Dendritic cell treated with granulocyte-macrophage colony-stimulating factor and Interleukin-4, amounts not matched to agents 40 ng/mL and 50 ng/mL, for 4 days (primary cell): ENCODE measurements at regions of chr14 and their contacts with region 1.

Region 1: GRCh38 chr14:69852531-69853321 is 26.5 kb upstream of the SMOC1 start:
- H3K4me3 Mint-ChIP-seq: no peak overlapping the region
- H3K27ac Mint-ChIP-seq: no peak overlapping the region
- H3K4me1 Mint-ChIP-seq: no peaks in the 10 kb centered on the region
- H3K27me3 Mint-ChIP-seq: peaks cover 12% of the 10 kb centered on the region

Region 2: GRCh38 chr14:69827560-69827959 is 25.2 kb before region 1 on chr14:
- intact Hi-C with region 1: loop called (anchors 1 kb)
- H3K4me3 Mint-ChIP-seq: no peak overlapping the region
- H3K27ac Mint-ChIP-seq: no peak overlapping the region
- H3K4me1 Mint-ChIP-seq: no peaks in the 10 kb centered on the region
- H3K27me3 Mint-ChIP-seq: peaks cover 7% of the 10 kb centered on the region

Region 3: DNA sequence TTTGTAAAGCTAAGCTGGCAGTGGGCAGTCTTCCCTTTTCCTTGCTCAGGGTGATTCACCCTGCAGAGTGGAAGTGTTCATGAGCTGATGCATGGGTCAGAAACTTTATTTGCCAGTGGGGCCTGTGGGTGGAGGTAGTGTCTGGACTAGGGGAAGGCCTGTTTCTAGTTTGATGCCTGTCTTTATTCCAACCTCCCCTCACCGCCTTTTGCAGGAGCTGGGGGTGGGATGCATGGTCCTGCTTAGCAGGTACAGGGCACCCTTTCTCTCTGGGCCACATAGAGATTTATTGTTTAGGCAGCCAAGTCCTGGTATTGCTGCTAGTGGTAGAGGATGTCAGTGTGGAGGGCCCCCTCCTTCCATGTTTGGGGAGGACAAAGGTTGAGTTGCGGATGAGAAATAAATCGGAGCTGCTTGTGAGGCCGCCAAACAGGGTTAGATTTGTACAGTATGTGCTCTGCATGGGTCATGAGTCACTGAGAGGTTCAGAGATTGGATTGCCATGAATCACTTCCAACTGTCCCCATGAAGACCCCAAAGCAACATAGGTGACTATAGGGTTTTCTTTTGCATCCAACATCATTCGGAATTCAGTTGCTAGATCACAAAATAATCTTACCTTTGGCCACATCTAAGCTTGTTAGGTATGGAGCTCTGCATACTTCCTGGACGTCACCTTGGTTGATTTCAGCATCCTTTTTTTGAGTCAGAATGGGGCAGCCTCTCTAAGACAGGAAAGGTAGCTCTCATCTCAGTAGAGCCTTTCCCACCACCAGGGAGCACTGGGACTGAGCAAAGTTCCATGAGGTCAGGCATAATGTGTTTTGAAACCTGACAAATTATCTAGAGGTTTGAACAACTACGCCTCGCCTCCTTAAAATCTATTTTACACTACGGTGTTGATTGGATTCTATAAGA is 35.3 kb after region 1 on chr14:
- intact Hi-C with region 1: no loop called
- H3K4me3 Mint-ChIP-seq: no peak overlapping the region
- H3K27ac Mint-ChIP-seq: no peak overlapping the region
- H3K4me1 Mint-ChIP-seq: no peaks in the 10 kb centered on the region
- H3K27me3 Mint-ChIP-seq: peaks cover 10% of the 10 kb centered on the region